Dendritic cell treated with granulocyte-macrophage colony-stimulating factor and Interleukin-4, amounts not matched to agents 40 ng/mL and 50 ng/mL, for 4 days (primary cell): ENCODE measurements at regions of chr18 and their contacts with region 1.

Region 1: GRCh38 chr18:13216092-13216582 is 2.4 kb upstream of the LDLRAD4 start:
- H3K4me3 Mint-ChIP-seq: peak overlapping the region; percentile 64
- H3K27ac Mint-ChIP-seq: peak overlapping the region; percentile 74
- H3K4me1 Mint-ChIP-seq: peaks cover 64% of the 10 kb centered on the region
- H3K27me3 Mint-ChIP-seq: peaks cover 5% of the 10 kb centered on the region

Region 2: DNA sequence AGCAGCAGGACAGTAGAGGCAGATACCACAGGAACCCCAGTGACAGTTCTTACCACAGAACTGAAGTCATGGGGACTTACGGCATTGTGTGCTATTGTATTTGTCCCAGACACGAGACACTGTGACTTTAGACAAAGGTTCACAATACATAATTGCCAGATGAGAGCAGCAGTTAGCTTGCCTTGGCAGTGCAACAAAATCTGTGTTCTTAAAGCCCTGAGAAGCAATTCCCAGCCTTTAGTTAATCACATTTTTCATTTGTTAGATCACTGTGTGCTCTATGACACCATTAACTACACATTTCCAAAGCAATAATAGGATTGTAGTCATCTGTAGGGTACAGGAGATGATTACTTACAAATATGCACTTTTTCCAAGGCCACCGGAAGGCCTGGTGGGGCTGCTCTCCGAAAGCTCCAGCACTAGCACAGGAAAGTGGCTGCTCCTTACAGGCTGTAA is 95.1 kb before region 1 on chr18:
- intact Hi-C with region 1: no loop called
- H3K4me3 Mint-ChIP-seq: no peak overlapping the region
- H3K27ac Mint-ChIP-seq: no peak overlapping the region
- H3K4me1 Mint-ChIP-seq: no peaks in the 10 kb centered on the region
- H3K27me3 Mint-ChIP-seq: no peaks in the 10 kb centered on the region

Region 3: DNA sequence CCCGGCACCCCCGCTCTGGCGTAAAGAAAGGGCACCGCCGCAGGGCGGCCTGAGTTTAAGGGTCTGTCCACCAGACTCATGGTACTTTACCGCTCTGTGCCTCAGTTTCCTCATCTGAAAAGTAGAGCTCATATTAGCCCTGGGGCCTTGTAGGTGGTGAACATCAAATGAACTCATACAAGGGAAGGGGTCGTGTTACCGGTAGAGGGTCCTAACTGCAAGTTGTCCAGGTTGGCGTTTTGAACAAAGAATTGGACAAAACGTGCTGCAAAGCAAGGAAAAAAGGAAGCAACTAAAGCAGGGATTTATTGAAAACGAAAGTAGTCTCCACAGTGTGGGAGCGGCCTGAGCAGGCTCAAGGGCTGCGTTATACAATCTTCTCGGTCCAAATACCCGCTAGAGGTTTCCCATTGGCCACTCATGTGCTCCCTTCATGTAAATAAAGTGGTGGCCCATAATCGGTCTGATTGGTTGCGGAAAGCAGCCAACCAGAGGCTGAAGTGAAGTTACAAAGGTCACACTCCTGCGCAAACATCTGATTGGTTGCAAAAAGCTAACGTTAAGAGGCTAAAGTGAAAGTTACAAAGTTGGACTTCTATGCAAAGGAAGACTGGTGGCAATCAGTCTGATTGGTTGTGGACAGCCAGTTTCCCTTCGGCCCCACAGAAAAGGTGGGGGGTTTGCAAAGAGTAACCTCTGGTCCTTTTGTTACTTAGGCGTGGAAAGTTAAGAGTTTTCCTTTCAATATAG is 78.3 kb before region 1 on chr18:
- intact Hi-C with region 1: no loop called
- H3K4me3 Mint-ChIP-seq: peak overlapping the region; percentile 92
- H3K27ac Mint-ChIP-seq: peak overlapping the region; percentile 98
- H3K4me1 Mint-ChIP-seq: peaks cover 23% of the 10 kb centered on the region
- H3K27me3 Mint-ChIP-seq: peaks cover 32% of the 10 kb centered on the region

Region 4: DNA sequence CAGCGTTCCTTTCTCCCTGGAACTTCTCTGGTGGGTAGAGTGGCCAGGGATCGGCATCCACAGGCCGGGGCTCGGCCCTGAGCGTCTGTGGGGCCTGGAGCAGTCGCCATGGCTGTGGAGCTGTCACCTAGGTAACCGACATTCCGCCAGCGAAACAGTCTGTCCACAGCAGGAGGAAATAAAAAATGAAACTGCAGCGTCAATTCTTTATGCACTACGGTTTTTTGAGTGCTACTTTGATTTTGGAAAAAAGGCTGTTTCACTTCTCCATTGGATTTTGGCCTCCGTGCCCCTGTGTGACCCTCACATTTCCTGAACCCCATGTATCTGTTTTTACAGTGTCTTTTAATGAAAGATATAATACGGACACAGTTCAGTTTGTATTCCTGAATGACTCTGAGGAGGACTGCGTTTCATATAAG is 165.8 kb after region 1 on chr18:
- intact Hi-C with region 1: loop called (anchors 1 kb)
- H3K4me3 Mint-ChIP-seq: peak overlapping the region; percentile 64
- H3K27ac Mint-ChIP-seq: peak overlapping the region; percentile 98
- H3K4me1 Mint-ChIP-seq: peaks cover 63% of the 10 kb centered on the region
- H3K27me3 Mint-ChIP-seq: peaks cover 8% of the 10 kb centered on the region

Region 5: GRCh38 chr18:13530879-13531387 is 314.8 kb after region 1 on chr18:
- intact Hi-C with region 1: loop called (anchors 2 kb)
- H3K4me3 Mint-ChIP-seq: no peak overlapping the region
- H3K27ac Mint-ChIP-seq: no peak overlapping the region
- H3K4me1 Mint-ChIP-seq: peaks cover 17% of the 10 kb centered on the region
- H3K27me3 Mint-ChIP-seq: no peaks in the 10 kb centered on the region

Region 6: GRCh38 chr18:13548966-13549879 is 333.1 kb after region 1 on chr18:
- intact Hi-C with region 1: loop called (anchors 5 kb)
- H3K4me3 Mint-ChIP-seq: no peak overlapping the region
- H3K27ac Mint-ChIP-seq: peak overlapping the region; percentile 79
- H3K4me1 Mint-ChIP-seq: peaks cover 45% of the 10 kb centered on the region
- H3K27me3 Mint-ChIP-seq: peaks cover 9% of the 10 kb centered on the region

Region 7: GRCh38 chr18:13629841-13630715 is 413.9 kb after region 1 on chr18:
- intact Hi-C with region 1: loop called (anchors 5 kb)
- H3K4me3 Mint-ChIP-seq: no peak overlapping the region
- H3K27ac Mint-ChIP-seq: peak overlapping the region; percentile 73
- H3K4me1 Mint-ChIP-seq: peaks cover 45% of the 10 kb centered on the region
- H3K27me3 Mint-ChIP-seq: no peaks in the 10 kb centered on the region

Region 8: GRCh38 chr18:13726232-13726971 is 510.3 kb after region 1 on chr18 and contains the starts of genes FAM210A and RNMT:
- intact Hi-C with region 1: loop called (anchors 5 kb)
- H3K4me3 Mint-ChIP-seq: peak within 1 kb of the TSS; percentile 96
- H3K27ac Mint-ChIP-seq: peak within 1 kb of the TSS; percentile 96
- H3K4me1 Mint-ChIP-seq: peaks cover 35% of the 10 kb centered on the region
- H3K27me3 Mint-ChIP-seq: no peaks in the 10 kb centered on the region